HCT116 (cell line): ENCODE measurements at regions of chr3 and their contacts with region 1.

Region 1: GRCh38 chr3:53938645-53939044 is 47.0 kb upstream of the SELENOK start:
- DNase-seq: peak; percentile 23
- ATAC-seq: peak; percentile 80
- H3K4me3 ChIP-seq: no peak overlapping the region
- H3K27ac ChIP-seq: no peak overlapping the region
- H3K4me1 ChIP-seq: no peaks in the 10 kb centered on the region
- H3K27me3 ChIP-seq: 0 out of 2 replicates have a peak, but pooled peaks cover 3% of the 10 kb centered on the region
- CTCF ChIP-seq: peak; percentile 50 to 83 (median 82); a peak in 5 of 6 replicates
- POLR2A ChIP-seq: no peak
- RAD21 ChIP-seq: peak; percentile 83

Region 2: DNA sequence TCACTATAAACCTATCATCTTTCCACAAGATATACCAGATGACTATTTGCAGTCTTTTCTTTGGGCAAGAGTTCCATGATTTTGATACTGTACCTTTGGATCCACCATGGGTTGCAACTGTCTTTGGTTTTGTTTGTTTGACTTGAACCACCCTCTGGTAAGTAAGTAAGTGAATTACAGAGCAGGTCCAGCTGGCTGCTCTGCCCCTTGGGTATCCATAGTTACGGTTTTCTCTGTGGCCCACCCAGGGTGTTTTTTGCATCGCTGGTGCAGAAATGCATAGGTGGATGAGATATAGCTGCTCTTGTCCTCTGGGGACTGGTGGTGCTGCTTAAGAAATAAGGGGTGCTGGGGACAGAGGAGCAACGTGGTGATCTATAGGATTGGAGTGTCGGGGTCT is 126.2 kb before region 1 on chr3:
- CTCF ChIA-PET with region 1: no interaction called
- POLR2A ChIA-PET with region 1: no interaction called
- RAD21 ChIA-PET with region 1: no interaction called
- intact Hi-C with region 1: no loop called
- DNase-seq: no peak
- ATAC-seq: peak; percentile 63
- H3K4me3 ChIP-seq: no peak overlapping the region
- H3K27ac ChIP-seq: no peak overlapping the region
- H3K4me1 ChIP-seq: no peaks in the 10 kb centered on the region
- H3K27me3 ChIP-seq: no peaks in the 10 kb centered on the region
- CTCF ChIP-seq: peak in 1 of 3 experiments; percentile 23; a peak in 2 of 6 replicates
- POLR2A ChIP-seq: no peak
- RAD21 ChIP-seq: no peak

Region 3: DNA sequence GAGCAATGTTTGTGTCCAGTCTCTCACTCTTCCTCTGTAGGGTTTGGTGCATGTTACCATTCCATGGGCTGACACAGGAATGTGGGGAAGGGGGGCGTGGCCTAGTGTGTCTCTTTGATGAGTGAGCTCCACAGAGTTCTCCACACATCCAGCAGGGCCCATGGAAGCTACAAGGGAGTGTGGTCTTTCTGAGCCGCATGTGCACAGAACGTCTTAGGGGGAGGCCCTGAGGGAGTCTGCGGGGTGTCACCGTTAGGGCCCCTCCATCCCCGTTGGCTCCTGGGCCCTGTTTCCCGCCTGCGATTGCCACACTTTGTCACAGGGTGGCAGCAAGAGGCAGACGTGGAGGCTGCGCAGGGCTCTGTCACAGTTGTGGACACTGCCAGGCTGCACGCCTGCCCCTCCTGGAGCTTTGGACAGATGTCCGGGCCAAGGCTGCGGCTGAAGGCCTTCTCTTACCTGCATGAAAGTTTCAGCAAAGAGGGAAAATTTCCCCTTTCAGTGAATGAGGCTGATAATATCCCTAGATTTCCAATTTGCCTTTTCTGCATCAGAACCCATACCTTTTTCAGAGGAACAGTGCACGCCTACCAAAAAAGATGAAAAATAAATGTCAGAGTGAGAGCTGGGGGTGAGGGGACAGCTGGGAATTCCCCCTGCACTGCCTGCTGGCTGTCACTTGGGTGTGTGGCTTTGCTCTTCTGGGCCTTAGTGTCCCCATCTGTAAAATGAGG is 208.0 kb after region 1 on chr3:
- CTCF ChIA-PET with region 1: interaction called, 3 read pairs
- POLR2A ChIA-PET with region 1: no interaction called
- RAD21 ChIA-PET with region 1: no interaction called
- intact Hi-C with region 1: loop called (anchors 10 kb)
- DNase-seq: peak; percentile 4
- ATAC-seq: peak; percentile 99
- H3K4me3 ChIP-seq: no peak overlapping the region
- H3K27ac ChIP-seq: no peak overlapping the region
- H3K4me1 ChIP-seq: no peaks in the 10 kb centered on the region
- H3K27me3 ChIP-seq: peaks cover 28% of the 10 kb centered on the region
- CTCF ChIP-seq: peak; percentile 36 to 70 (median 66); a peak in 4 of 6 replicates
- POLR2A ChIP-seq: no peak
- RAD21 ChIP-seq: peak; percentile 77

Region 4: GRCh38 chr3:54294214-54294613 is 355.6 kb after region 1 on chr3:
- CTCF ChIA-PET with region 1: interaction called, 9 read pairs
- POLR2A ChIA-PET with region 1: no interaction called
- RAD21 ChIA-PET with region 1: no interaction called
- intact Hi-C with region 1: loop called (anchors 5 kb)
- DNase-seq: no peak
- ATAC-seq: no peak
- H3K4me3 ChIP-seq: no peak overlapping the region
- H3K27ac ChIP-seq: no peak overlapping the region
- H3K4me1 ChIP-seq: no peaks in the 10 kb centered on the region
- H3K27me3 ChIP-seq: peaks cover 33% of the 10 kb centered on the region
- CTCF ChIP-seq: peak in 1 of 3 experiments; percentile 32; a peak in 1 of 6 replicates
- POLR2A ChIP-seq: no peak
- RAD21 ChIP-seq: no peak

Region 5: GRCh38 chr3:54374214-54374855 is 435.7 kb after region 1 on chr3:
- CTCF ChIA-PET with region 1: interaction called, 31 read pairs
- POLR2A ChIA-PET with region 1: no interaction called
- RAD21 ChIA-PET with region 1: no interaction called
- intact Hi-C with region 1: loop called (anchors 2 kb)
- DNase-seq: no peak
- ATAC-seq: peak; percentile 77
- H3K4me3 ChIP-seq: no peak overlapping the region
- H3K27ac ChIP-seq: no peak overlapping the region
- H3K4me1 ChIP-seq: no peaks in the 10 kb centered on the region
- H3K27me3 ChIP-seq: 0 out of 2 replicates have a peak, but pooled peaks cover 17% of the 10 kb centered on the region
- CTCF ChIP-seq: peak; percentile 27 to 60 (median 54); a peak in 5 of 6 replicates
- POLR2A ChIP-seq: no peak
- RAD21 ChIP-seq: peak; percentile 63

Region 6: GRCh38 chr3:54427941-54428871 is 489.6 kb after region 1 on chr3:
- CTCF ChIA-PET with region 1: interaction called, 3 read pairs
- POLR2A ChIA-PET with region 1: no interaction called
- RAD21 ChIA-PET with region 1: no interaction called
- intact Hi-C with region 1: loop called (anchors 5 kb)
- DNase-seq: peak; percentile 36
- ATAC-seq: peak; percentile 49; the same call in 1 of the 2 replicates
- H3K4me3 ChIP-seq: no peak overlapping the region
- H3K27ac ChIP-seq: no peak overlapping the region
- H3K4me1 ChIP-seq: no peaks in the 10 kb centered on the region
- H3K27me3 ChIP-seq: no peaks in the 10 kb centered on the region; the same call in 1 of the 2 replicates
- CTCF ChIP-seq: peak; percentile 31 to 80 (median 80); a peak in 5 of 6 replicates
- POLR2A ChIP-seq: no peak
- RAD21 ChIP-seq: peak; percentile 70

Region 7: GRCh38 chr3:55180936-55181535 is 1242.4 kb after region 1 on chr3:
- CTCF ChIA-PET with region 1: interaction called, 3 read pairs
- POLR2A ChIA-PET with region 1: no interaction called
- RAD21 ChIA-PET with region 1: no interaction called
- intact Hi-C with region 1: loop called (anchors 10 kb)
- DNase-seq: no peak
- ATAC-seq: no peak
- H3K4me3 ChIP-seq: no peak overlapping the region
- H3K27ac ChIP-seq: no peak overlapping the region
- H3K4me1 ChIP-seq: no peaks in the 10 kb centered on the region
- H3K27me3 ChIP-seq: no peaks in the 10 kb centered on the region
- CTCF ChIP-seq: peak in 2 of 3 experiments; percentile 63 to 67; a peak in 4 of 6 replicates
- POLR2A ChIP-seq: no peak
- RAD21 ChIP-seq: 0 out of 2 replicates have a peak, but pooled peaks have one; percentile 9